BJ (cell line): ENCODE measurements at regions of chr7 and their contacts with region 1.

Region 1: GRCh38 chr7:149742075-149742701 is 31.2 kb downstream of the ZNF467 start:
- DNase-seq: no peak
- H3K4me3 ChIP-seq: peak overlapping the region; percentile 9; the same call in 1 of the 2 replicates
- H3K27me3 ChIP-seq: peaks cover 2% of the 10 kb centered on the region; the same call in 1 of the 2 replicates
- CTCF ChIP-seq: peak; percentile 94

Region 2: GRCh38 chr7:149310113-149310836 is 431.9 kb before region 1 on chr7:
- CTCF ChIA-PET with region 1: interaction called, 10 read pairs
- POLR2A ChIA-PET with region 1: no interaction called
- DNase-seq: peak; percentile 22
- H3K4me3 ChIP-seq: no peak overlapping the region
- H3K27me3 ChIP-seq: peaks cover 2% of the 10 kb centered on the region
- CTCF ChIP-seq: peak; percentile 65

Region 3: GRCh38 chr7:149662591-149663095 is 79.5 kb before region 1 on chr7:
- CTCF ChIA-PET with region 1: interaction called, 116 read pairs
- POLR2A ChIA-PET with region 1: no interaction called
- DNase-seq: no peak
- H3K4me3 ChIP-seq: no peak overlapping the region
- H3K27me3 ChIP-seq: peaks cover 2% of the 10 kb centered on the region
- CTCF ChIP-seq: peak; percentile 64

Region 4: DNA sequence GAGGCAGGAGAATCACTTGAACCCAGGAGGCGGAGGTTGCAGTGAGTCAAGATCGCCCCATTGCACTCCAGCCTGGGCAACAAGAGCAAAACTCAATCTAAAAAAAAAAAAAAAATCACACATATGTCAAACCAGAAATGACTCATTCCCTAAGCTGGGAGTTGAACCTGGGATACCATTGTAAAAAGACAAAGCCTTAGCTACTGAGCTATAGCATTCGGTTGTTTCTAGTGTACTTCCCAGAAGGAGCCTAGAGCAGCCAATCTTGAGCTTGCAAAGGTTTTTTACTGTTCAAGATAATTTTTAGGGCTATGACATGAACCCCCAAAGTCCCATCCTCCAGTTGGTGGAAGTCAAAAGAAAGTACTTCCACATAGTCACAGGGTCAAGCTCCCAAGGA is 56.7 kb before region 1 on chr7:
- CTCF ChIA-PET with region 1: interaction called, 11 read pairs
- POLR2A ChIA-PET with region 1: no interaction called
- DNase-seq: no peak
- H3K4me3 ChIP-seq: no peak overlapping the region
- H3K27me3 ChIP-seq: no peaks in the 10 kb centered on the region; the same call in 1 of the 2 replicates
- CTCF ChIP-seq: no peak

Region 5: GRCh38 chr7:149729983-149730801 is 12.0 kb before region 1 on chr7:
- CTCF ChIA-PET with region 1: interaction called, 16 read pairs
- POLR2A ChIA-PET with region 1: interaction called, 5 read pairs
- DNase-seq: no peak
- H3K4me3 ChIP-seq: no peak overlapping the region
- H3K27me3 ChIP-seq: no peaks in the 10 kb centered on the region
- CTCF ChIP-seq: no peak

Region 6: GRCh38 chr7:149759111-149759860 is 17.1 kb after region 1 on chr7:
- CTCF ChIA-PET with region 1: interaction called, 11 read pairs
- POLR2A ChIA-PET with region 1: interaction called, 3 read pairs
- DNase-seq: no peak
- H3K4me3 ChIP-seq: no peak overlapping the region
- H3K27me3 ChIP-seq: peaks cover 9% of the 10 kb centered on the region
- CTCF ChIP-seq: no peak

Region 7: GRCh38 chr7:149887311-149887710 is 145.1 kb after region 1 on chr7:
- CTCF ChIA-PET with region 1: no interaction called
- POLR2A ChIA-PET with region 1: no interaction called
- DNase-seq: no peak
- H3K4me3 ChIP-seq: no peak overlapping the region
- H3K27me3 ChIP-seq: no peaks in the 10 kb centered on the region
- CTCF ChIP-seq: no peak